CD8-positive, alpha-beta T cell (primary cell): ENCODE measurements at regions of chr11 and their contacts with region 1.

Region 1: DNA sequence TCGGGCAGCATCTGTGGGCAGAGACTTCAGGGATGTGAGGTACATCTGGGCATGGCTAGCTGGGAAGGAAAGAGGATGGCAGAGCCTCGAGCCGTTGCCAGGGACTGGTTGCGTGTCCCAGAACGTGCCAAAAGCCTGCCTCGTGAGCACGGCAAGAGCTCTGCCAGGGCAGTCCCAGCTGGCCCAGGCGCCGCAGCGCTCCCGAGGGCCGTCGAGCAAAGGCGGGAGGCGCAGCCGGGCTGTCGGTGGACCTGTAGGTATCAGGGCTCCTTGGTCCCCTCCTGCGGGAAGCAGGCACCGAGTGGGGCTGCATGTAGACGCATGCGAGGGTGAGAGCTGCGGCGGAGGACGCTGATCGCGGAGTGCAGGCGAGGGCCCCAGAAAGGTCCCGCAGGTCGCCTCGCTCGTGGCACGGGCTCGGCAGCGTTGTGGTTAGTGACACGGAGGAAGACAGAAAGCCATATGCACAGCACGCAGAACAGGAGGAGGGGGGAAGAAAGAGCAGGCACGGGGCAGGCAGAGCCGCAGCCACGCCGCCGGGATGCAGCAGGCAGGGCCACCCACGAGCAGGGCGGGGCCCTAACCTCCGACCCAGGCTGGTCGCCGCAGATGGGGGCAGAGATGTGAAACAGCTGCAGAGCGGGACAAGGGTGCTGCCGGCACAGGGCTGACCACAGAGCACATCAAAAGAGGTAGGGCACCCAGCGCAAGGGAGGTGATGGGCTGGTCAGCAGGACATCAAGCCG is 18.0 kb downstream of the LSP1 start:
- DNase-seq: peak in 8 of 9 experiments; percentile 31 to 82 (median 62)
- ATAC-seq: peak; percentile 84
- H3K4me3 ChIP-seq: peak overlapping the region; percentile 26 to 33
- H3K4me3 Mint-ChIP-seq: peak overlapping the region; percentile 76
- H3K27ac ChIP-seq: peak overlapping the region; percentile 45 to 46
- H3K27ac Mint-ChIP-seq: peak overlapping the region; percentile 94
- H3K4me1 ChIP-seq: peaks cover 70% of the 10 kb centered on the region
- H3K4me1 Mint-ChIP-seq: peaks cover 59% of the 10 kb centered on the region
- H3K27me3 ChIP-seq: no peaks in the 10 kb centered on the region
- H3K27me3 Mint-ChIP-seq: no peaks in the 10 kb centered on the region
- CTCF ChIP-seq: no peak

Region 2: DNA sequence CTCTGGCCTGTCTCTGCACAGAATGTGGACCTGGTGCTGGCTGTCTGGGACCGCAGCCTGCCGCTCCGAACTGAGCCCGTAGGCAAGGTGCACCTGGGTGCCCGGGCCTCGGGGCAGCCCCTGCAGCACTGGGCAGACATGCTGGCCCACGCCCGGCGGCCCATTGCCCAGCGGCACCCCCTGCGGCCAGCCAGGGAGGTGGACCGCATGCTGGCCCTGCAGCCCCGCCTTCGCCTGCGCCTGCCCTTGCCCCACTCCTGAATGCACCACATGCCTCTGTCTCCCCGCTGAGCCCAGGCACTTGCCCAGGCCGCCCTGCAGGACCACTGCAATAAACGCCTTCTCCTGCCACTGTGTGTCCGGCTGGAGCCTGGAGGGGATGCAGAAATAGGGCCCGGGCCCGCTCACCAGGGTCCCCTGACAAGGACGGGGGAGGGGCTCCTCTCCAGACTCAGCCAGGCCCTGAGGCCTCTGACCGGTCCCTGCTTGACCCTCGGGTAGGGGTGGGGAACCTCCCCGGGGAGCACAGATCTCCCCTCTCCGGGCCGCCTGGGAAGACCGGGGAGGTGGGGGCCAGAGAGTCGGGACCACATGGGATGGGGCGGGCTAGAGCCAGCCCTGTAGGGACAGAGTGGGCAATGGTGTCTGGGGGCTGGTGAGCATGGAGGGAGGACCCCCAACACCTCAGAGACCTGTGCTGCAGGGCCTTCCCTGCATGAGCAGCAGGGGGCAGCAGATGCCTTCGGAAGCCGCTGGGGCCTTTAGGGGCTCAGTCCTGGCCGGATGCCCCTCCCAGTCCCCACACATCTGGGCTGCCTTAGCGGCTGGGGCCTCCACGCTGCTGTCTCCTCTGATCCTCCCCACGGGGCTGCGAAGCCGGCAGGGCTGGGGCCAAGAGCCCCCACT is 33.5 kb before region 1 on chr11:
- CTCF ChIA-PET with region 1: interaction called, 5 read pairs
- POLR2A ChIA-PET with region 1: no interaction called
- intact Hi-C with region 1: loop called in 1 of 2 experiments (anchors 1 kb)
- DNase-seq: peak; percentile 73 to 94 (median 88)
- ATAC-seq: peak; percentile 98
- H3K4me3 ChIP-seq: no peak overlapping the region
- H3K4me3 Mint-ChIP-seq: no peak overlapping the region
- H3K27ac ChIP-seq: no peak overlapping the region
- H3K27ac Mint-ChIP-seq: no peak overlapping the region
- H3K4me1 ChIP-seq: peaks cover 25% of the 10 kb centered on the region
- H3K4me1 Mint-ChIP-seq: peaks cover 10% of the 10 kb centered on the region
- H3K27me3 ChIP-seq: peaks cover 0 to 6% of the 10 kb centered on the region in 2 experiments
- H3K27me3 Mint-ChIP-seq: no peaks in the 10 kb centered on the region
- CTCF ChIP-seq: peak; percentile 84

Region 3: DNA sequence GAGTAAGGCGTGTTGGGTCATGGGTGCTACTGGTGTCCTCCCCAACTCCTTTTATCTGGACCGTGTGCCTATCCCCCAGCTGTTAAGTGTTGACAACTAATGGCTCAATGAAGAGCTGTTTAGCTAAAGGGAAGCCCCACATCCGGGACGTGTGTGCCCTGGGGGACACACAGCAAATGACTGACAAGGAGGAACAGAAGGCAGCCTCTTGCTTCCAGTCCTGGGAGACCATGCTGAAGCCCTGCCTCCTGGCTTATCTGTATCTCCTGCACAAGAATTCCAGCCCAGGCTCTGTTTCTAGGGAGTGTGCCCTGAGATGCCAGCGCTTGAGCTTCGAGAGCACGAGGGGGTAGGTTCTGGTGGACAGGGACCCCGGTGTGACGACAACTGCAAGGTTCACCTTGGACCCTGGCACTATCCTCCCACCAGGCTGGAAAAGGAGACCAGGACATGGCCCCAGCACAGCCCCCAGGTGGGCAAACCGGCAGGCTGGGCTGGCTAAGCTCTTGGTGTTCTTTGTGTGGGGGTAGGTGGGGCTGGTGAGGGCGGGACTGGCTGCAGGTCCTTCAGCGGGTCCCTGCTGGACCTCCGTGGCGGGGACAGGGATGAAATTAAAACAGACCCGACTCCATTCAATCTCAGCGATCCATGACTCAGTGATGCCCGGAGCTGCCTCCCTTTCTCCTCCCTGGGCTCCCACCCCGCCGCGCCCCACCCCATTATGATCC is 378.5 kb after region 1 on chr11:
- CTCF ChIA-PET with region 1: no interaction called
- POLR2A ChIA-PET with region 1: no interaction called
- intact Hi-C with region 1: no loop called
- DNase-seq: no peak
- ATAC-seq: no peak
- H3K4me3 ChIP-seq: no peak overlapping the region
- H3K4me3 Mint-ChIP-seq: no peak overlapping the region
- H3K27ac ChIP-seq: no peak overlapping the region
- H3K27ac Mint-ChIP-seq: no peak overlapping the region
- H3K4me1 ChIP-seq: no peaks in the 10 kb centered on the region
- H3K4me1 Mint-ChIP-seq: no peaks in the 10 kb centered on the region
- H3K27me3 ChIP-seq: no peaks in the 10 kb centered on the region
- H3K27me3 Mint-ChIP-seq: peaks cover 4% of the 10 kb centered on the region
- CTCF ChIP-seq: no peak